ENCODE measurements at regions of chr3 and their contacts with region 1.

Region 1: GRCh38 chr3:112321867-112322649 is 10.9 kb upstream of the CD200 start:
- DNase-seq: no peak
- ATAC-seq: no peak
- H3K4me3 ChIP-seq: no peak overlapping the region
- H3K4me3 Mint-ChIP-seq: no peak overlapping the region
- H3K27ac ChIP-seq: no peak overlapping the region
- H3K27ac Mint-ChIP-seq: no peak overlapping the region
- H3K4me1 ChIP-seq: no peaks in the 10 kb centered on the region
- H3K4me1 Mint-ChIP-seq: no peaks in the 10 kb centered on the region
- H3K27me3 ChIP-seq: no peaks in the 10 kb centered on the region
- H3K27me3 Mint-ChIP-seq: no peaks in the 10 kb centered on the region
- CTCF ChIP-seq: no peak

Region 2: DNA sequence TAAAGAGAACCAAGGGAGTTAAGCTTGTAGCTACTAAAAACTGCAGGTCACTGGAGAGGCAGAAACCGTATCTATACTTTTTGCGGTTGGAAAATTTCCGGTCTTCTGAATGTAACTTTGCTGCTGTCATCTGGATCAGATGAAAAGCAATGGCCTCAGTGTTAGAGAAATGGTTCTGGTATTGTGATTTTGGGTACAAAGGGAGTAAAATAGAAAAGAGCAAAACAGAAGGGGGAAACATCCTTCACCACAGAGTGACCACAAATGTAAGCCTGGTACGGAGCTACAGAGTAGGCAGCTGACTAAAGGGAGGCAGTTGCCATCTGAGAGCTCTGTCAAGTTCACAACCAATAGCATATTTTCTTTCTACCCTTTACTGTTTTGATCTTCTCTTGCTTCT is 774.4 kb before region 1 on chr3:
- CTCF ChIA-PET with region 1: no interaction called
- POLR2A ChIA-PET with region 1: no interaction called
- intact Hi-C with region 1: no loop called
- DNase-seq: peak; percentile 69
- ATAC-seq: peak; percentile 72
- H3K4me3 ChIP-seq: peak overlapping the region in 2 of 5 experiments; percentile 28 to 43
- H3K4me3 Mint-ChIP-seq: no peak overlapping the region
- H3K27ac ChIP-seq: peak overlapping the region; percentile 47 to 72
- H3K27ac Mint-ChIP-seq: no peak overlapping the region
- H3K4me1 ChIP-seq: peaks cover 54 to 81% of the 10 kb centered on the region in 2 donors
- H3K4me1 Mint-ChIP-seq: peaks cover 37% of the 10 kb centered on the region
- H3K27me3 ChIP-seq: no peaks in the 10 kb centered on the region
- H3K27me3 Mint-ChIP-seq: no peaks in the 10 kb centered on the region
- CTCF ChIP-seq: no peak

Region 3: DNA sequence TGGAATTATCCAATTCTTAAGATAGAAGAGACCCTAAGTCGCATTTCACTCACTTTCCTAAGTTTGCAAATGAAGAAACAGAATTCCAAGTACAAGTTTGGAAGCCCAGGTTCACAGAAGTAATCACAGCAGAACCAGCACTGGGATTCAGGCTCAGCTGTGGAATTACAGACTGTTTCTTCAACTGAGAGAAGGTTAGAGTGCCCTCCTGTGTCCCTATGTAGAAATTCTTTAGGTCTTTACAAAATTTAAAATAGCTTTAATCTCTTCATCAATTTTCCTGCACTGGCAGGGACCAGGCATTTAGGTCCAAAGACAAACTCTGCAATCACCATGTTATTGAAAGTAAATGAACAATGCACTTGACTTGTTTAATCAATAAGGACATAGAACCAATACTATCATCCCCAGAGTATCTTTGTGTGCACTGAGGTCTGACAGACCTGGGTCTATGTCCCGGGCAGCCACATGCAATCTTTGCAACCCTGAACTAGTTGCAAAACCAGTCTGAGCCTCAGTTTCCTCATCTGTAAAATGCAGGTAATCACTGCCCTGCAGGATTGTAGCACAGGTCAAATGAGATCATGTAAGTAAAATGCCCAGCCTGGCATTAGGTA is 630.7 kb before region 1 on chr3:
- CTCF ChIA-PET with region 1: no interaction called
- POLR2A ChIA-PET with region 1: no interaction called
- intact Hi-C with region 1: no loop called
- DNase-seq: peak; percentile 56
- ATAC-seq: peak; percentile 49
- H3K4me3 ChIP-seq: no peak overlapping the region
- H3K4me3 Mint-ChIP-seq: no peak overlapping the region
- H3K27ac ChIP-seq: no peak overlapping the region
- H3K27ac Mint-ChIP-seq: no peak overlapping the region
- H3K4me1 ChIP-seq: peaks cover 2 to 19% of the 10 kb centered on the region in 2 donors
- H3K4me1 Mint-ChIP-seq: peaks cover 22% of the 10 kb centered on the region
- H3K27me3 ChIP-seq: no peaks in the 10 kb centered on the region
- H3K27me3 Mint-ChIP-seq: no peaks in the 10 kb centered on the region
- CTCF ChIP-seq: peak; percentile 62

Region 4: DNA sequence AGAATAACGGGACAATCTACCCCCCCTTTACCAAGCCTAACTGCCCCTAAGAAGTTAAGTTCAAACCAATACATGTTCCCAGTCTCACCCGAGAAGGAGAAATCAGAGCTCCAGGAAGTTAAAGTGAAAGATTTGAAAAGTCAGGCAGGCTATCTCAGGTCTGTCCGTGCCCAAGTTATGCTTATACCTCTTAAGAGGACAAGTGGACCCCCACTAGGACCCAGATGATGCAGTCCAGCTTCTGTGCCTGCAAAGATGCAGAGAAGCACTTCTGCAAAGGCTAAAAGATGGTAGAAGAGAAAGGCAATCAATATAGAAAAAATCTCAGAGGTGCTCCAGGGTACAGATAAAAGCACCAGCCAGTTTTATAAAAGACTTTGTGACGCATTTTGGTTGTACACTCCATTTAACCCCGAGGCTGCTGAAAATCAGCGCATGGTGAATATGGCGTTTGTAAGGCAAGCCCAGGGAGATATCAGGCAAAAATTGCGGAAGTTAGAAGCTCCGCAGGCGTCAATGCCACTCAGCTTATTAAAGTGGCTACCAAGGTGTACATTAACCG is 18.2 kb before region 1 on chr3:
- CTCF ChIA-PET with region 1: interaction called, 11 read pairs
- POLR2A ChIA-PET with region 1: no interaction called
- intact Hi-C with region 1: no loop called
- DNase-seq: peak; percentile 77
- ATAC-seq: peak; percentile 86
- H3K4me3 ChIP-seq: peak overlapping the region; percentile 44 to 83 (median 68)
- H3K4me3 Mint-ChIP-seq: no peak overlapping the region
- H3K27ac ChIP-seq: peak overlapping the region; percentile 60 to 71
- H3K27ac Mint-ChIP-seq: no peak overlapping the region
- H3K4me1 ChIP-seq: peaks cover 22% of the 10 kb centered on the region in 2 donors
- H3K4me1 Mint-ChIP-seq: peaks cover 1% of the 10 kb centered on the region
- H3K27me3 ChIP-seq: no peaks in the 10 kb centered on the region
- H3K27me3 Mint-ChIP-seq: no peaks in the 10 kb centered on the region
- CTCF ChIP-seq: no peak

Measured in B cell (primary cell).